Mammary epithelial cell (primary cell): ENCODE measurements at regions of chr6 and their contacts with region 1.

Region 1: DNA sequence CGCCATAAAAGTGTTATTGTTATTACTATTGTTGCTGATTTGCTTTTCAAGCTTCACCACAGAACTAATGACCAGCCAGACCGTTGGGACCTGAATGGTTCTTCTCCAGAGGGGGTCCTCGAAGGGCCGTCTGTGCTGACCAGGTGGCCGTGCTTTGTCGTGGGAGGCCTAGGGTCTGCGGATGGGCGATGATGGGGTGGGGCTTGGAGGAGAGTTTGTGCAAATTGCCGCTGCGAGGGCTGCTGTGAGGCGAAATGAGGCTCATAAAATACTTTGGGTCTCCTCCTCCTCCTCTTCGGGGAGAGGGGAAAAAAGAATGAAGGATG is 6.0 kb upstream of the ZBTB22 start:
- DNase-seq: no peak
- H3K4me3 ChIP-seq: peak overlapping the region; percentile 43 to 80 (median 65)
- H3K27ac ChIP-seq: peak overlapping the region; percentile 23
- H3K4me1 ChIP-seq: peaks cover 38% of the 10 kb centered on the region
- H3K27me3 ChIP-seq: no peaks in the 10 kb centered on the region
- CTCF ChIP-seq: no peak

Region 2: DNA sequence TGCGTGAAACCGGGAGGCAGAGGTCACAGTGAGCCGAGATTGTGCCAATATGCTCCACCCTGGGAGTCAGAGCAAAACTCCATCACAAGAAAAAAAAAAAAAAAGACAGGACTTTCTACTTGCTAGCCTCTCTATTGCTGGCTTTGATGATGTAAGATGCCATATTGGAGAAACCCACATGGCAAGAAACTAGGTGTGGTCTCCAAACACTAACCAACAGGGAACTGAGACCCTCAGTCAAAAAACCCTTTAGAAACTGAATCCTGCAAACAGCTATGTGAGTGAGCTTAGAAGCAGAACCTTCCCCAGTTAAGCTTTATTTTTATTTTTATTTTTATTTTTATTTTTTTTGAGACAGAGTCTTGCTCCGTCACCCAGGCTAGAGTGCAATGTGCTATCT is 12.3 kb after region 1 on chr6:
- CTCF ChIA-PET with region 1: no interaction called
- dilution Hi-C with region 1: no loop called
- in situ Hi-C with region 1: no loop called
- intact Hi-C with region 1: loop called (anchors 1 kb)
- DNase-seq: no peak
- H3K4me3 ChIP-seq: no peak overlapping the region
- H3K27ac ChIP-seq: no peak overlapping the region
- H3K4me1 ChIP-seq: no peaks in the 10 kb centered on the region
- H3K27me3 ChIP-seq: no peaks in the 10 kb centered on the region
- CTCF ChIP-seq: no peak

Region 3: DNA sequence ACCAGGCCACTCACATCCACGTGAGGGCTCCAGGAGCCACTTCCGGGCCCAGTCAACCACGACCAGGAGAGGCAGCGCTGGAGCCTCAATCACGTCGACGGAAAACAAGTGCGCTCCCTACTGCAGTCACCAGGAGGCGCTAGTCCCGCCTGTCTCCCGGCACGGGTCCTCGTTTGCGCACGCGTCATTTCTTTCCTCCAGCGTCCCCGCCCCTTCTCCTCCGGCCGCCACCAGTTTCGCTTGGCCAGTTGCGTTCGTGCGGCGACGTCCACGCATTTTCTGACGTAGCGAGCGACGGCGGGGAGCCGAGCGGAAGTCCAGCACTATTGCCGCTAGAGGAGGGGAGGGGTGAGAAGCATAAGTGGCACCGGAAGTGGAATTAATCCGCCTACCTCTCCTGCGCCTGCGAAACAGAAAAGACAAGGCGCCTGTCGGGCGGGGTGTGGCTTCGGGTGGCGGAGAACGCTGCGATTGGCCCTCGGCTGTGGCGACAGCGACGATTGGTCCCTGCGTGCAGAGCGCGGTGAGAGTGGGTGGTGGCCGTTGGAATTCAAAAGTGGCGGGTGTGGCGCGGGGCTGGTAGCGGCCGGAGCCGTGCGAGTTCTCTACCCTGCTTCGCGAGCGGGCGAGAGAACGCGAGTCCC is 67.8 kb after region 1 on chr6 and contains the start of gene KIFC1:
- CTCF ChIA-PET with region 1: no interaction called
- dilution Hi-C with region 1: no loop called
- in situ Hi-C with region 1: no loop called
- intact Hi-C with region 1: no loop called
- DNase-seq: peak; percentile 100
- H3K4me3 ChIP-seq: peak within 1 kb of the TSS; percentile 67 to 93 (median 91)
- H3K27ac ChIP-seq: peak within 1 kb of the TSS; percentile 88
- H3K4me1 ChIP-seq: peaks cover 37% of the 10 kb centered on the region
- H3K27me3 ChIP-seq: no peaks in the 10 kb centered on the region
- CTCF ChIP-seq: peak; percentile 88 to 94
- total RNA-seq, gene KIFC1: 2.8 to 36.7 TPM